ENCODE measurements at regions of chr16 and their contacts with region 1.

Region 1: GRCh38 chr16:30186782-30187555 is 3.6 kb downstream of the CORO1A start:
- DNase-seq: peak; percentile 88
- H3K4me3 Mint-ChIP-seq: peak overlapping the region; percentile 100
- H3K27ac Mint-ChIP-seq: peak overlapping the region; percentile 98
- H3K4me1 Mint-ChIP-seq: peaks cover 27% of the 10 kb centered on the region
- H3K27me3 Mint-ChIP-seq: peaks cover 5% of the 10 kb centered on the region

Region 2: GRCh38 chr16:30112197-30113030 is 74.6 kb before region 1 on chr16:
- CTCF ChIA-PET with region 1: interaction called, 11 read pairs
- DNase-seq: peak; percentile 72
- H3K4me3 Mint-ChIP-seq: no peak overlapping the region
- H3K27ac Mint-ChIP-seq: peak overlapping the region; percentile 39
- H3K4me1 Mint-ChIP-seq: peaks cover 20% of the 10 kb centered on the region
- H3K27me3 Mint-ChIP-seq: no peaks in the 10 kb centered on the region

Region 3: GRCh38 chr16:30166202-30166902 is 20.6 kb before region 1 on chr16:
- CTCF ChIA-PET with region 1: no interaction called
- DNase-seq: peak; percentile 31
- H3K4me3 Mint-ChIP-seq: no peak overlapping the region
- H3K27ac Mint-ChIP-seq: no peak overlapping the region
- H3K4me1 Mint-ChIP-seq: peaks cover 33% of the 10 kb centered on the region
- H3K27me3 Mint-ChIP-seq: peaks cover 11% of the 10 kb centered on the region